Esophagus muscularis mucosa (tissue), 4 donors: ENCODE measurements at regions of chr1 and their contacts with region 1.

Region 1: DNA sequence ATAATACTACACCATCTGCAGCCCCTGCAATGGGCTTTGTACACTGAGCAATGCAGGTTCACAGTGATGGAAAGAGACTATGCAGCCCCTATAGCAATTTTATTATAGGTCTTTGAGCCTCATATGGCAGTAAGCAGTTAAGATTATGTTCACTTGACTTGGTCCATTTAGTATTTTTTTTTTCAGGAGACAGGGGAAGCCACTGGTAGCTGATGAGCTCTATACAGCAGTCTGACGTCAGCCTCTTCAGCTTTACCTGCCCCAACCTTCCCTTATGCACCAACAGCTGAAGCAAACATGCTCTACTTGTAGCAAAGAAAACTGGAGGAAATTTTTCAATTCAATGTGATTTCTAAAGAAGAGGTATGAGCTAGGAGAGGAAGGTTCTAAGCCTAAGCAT is 32.2 kb downstream of the AIDA start:
- DNase-seq: no peak
- H3K4me3 ChIP-seq: no peak overlapping the region
- H3K27ac ChIP-seq: no peak overlapping the region
- H3K4me1 ChIP-seq: no peaks in the 10 kb centered on the region
- H3K27me3 ChIP-seq: no peaks in the 10 kb centered on the region
- CTCF ChIP-seq: no peak
- EP300 ChIP-seq: no peak
- POLR2A ChIP-seq: no peak

Region 2: DNA sequence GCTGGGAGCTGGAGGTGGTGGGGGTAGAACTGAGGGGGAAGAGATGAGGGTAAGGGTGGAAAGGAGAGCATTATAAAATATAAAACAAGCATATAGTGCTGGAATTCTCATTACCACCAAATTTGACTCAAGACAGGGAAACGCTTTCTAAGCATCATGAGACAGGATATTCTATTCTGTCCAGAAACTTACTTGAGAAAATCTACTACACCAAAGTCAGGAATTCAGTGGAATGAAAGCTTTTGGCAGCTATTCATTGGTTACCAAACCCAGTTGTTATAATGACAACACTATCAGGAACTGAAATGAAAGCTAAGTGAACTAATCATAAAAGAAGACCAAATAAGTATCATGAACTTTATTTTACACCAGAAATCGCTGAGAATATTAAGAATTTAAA is 17.7 kb after region 1 on chr1:
- intact Hi-C with region 1: loop called (anchors 2 kb)
- DNase-seq: no peak
- H3K4me3 ChIP-seq: no peak overlapping the region
- H3K27ac ChIP-seq: peak overlapping the region in 1 of 4 donors; percentile 3
- H3K4me1 ChIP-seq: peaks cover 0 to 8% (median 0%) of the 10 kb centered on the region in 4 donors
- H3K27me3 ChIP-seq: no peaks in the 10 kb centered on the region
- CTCF ChIP-seq: no peak
- EP300 ChIP-seq: no peak
- POLR2A ChIP-seq: no peak